Lower leg skin (tissue), 4 donors: ENCODE measurements at regions of chr4 and their contacts with region 1.

Region 1: GRCh38 chr4:89024051-89024675 is 32.8 kb downstream of the FAM13A start:
- DNase-seq: peak in 1 of 2 donors; percentile 69
- H3K4me3 ChIP-seq: no peak overlapping the region
- CTCF ChIP-seq: peak in 1 of 3 donors; percentile 74
- POLR2A ChIP-seq: no peak

Region 2: DNA sequence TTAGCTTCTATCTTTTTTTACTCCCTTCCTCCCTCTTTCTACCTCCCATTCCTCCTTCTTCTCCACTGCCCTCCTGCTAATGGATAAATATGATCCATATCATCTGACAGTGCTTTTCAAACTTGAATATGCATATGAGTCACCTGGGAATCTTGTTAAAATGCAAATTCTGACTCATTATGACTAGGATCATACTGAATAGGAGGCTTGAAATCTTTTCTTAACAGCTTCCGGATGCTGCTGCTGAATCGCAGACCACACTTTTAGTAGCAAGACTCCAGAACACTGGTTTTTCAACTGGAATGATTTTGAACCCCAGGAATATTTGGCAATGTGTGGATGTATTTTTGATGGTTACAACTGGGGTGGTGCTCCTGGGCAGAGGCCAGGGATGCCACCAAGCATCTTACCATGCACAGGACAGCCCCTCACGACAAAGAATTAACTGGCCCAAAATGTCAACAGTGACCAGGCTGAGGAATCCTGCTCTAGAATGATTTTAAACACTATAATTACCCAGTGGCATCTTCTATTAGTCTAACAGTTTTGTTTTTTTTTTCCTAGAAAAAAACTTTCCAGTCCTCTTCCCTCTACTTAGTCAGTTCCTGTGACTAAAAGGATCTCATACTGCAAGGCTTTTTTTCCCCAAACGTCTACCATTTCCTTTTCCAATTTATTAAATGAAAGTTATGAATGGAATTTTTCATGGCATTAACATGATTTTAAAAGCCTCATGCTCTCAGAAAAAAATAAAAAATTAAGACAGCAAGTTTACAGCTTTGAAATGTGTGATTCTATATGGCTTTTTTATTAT is 490.0 kb before region 1 on chr4:
- intact Hi-C with region 1: loop called (anchors 5 kb)
- DNase-seq: no peak
- H3K4me3 ChIP-seq: no peak overlapping the region
- CTCF ChIP-seq: no peak
- POLR2A ChIP-seq: no peak

Region 3: GRCh38 chr4:88818631-88819470 is 205.3 kb before region 1 on chr4:
- intact Hi-C with region 1: loop called (anchors 5 kb)
- DNase-seq: peak in 1 of 2 donors; percentile 39
- H3K4me3 ChIP-seq: no peak overlapping the region
- CTCF ChIP-seq: no peak
- POLR2A ChIP-seq: no peak

Region 4: GRCh38 chr4:89356086-89356485 is 331.9 kb after region 1 on chr4:
- intact Hi-C with region 1: no loop called
- DNase-seq: no peak
- H3K4me3 ChIP-seq: no peak overlapping the region
- CTCF ChIP-seq: no peak
- POLR2A ChIP-seq: no peak